ENCODE measurements at regions of chr17 and their contacts with region 1.

Region 1: GRCh38 chr17:17001874-17002520 is 30.1 kb upstream of the TNFRSF13B start:
- DNase-seq: peak; percentile 93

Region 2: DNA sequence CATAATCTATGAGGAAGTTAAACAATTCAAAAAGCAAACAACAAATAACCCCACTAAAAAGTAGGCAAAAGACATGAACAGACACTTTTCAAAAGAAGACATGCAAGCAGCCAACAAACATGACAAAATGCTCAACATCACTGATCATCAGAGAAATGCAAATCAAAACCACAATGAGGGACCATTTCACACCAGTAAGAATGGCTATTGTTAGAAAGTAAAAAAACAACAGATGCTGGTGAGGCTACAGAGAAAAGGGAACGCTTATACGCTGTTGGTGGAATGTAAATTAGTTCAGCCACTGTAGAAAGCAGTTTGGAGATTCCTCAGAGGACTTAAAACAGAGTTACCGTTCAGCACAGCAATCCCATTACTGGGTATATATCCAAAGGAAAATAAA is 54.5 kb before region 1 on chr17:
- intact Hi-C with region 1: no loop called
- DNase-seq: no peak

Region 3: GRCh38 chr17:17125136-17126084 is 123.4 kb after region 1 on chr17:
- intact Hi-C with region 1: loop called in 1 of 2 experiments (anchors 10 kb)
- DNase-seq: no peak

Region 4: GRCh38 chr17:17151962-17152361 is 150.0 kb after region 1 on chr17:
- intact Hi-C with region 1: loop called in 1 of 2 experiments (anchors 10 kb)
- DNase-seq: peak; percentile 98

Region 5: GRCh38 chr17:17206124-17206912 is 204.3 kb after region 1 on chr17 and contains the start of gene PLD6:
- intact Hi-C with region 1: loop called (anchors 10 kb)
- DNase-seq: peak; percentile 95
- total RNA-seq, gene PLD6: 2.9 to 4.4 TPM

Region 6: DNA sequence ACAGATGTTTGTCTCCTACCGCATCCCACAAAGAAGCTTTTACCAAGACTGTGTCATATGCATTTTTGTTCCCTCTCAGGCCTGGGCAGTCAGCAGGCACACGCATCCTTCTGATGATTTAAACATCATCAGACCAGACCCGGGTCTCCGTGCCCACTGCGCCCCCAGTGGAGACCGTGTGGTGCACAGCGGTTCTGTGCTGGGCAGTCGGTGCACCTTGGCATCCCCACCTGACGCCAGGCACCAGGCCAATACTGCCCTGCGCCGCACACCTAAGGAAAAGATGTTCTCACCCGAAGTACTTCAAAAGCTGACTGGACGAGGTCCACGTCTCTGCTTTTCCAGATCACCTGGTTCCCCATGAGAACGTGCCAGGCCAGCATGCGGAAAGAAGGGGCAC is 214.8 kb after region 1 on chr17:
- intact Hi-C with region 1: loop called in 1 of 2 experiments (anchors 10 kb)
- DNase-seq: no peak